PC-9 (cell line): ENCODE measurements at regions of chr4 and their contacts with region 1.

Region 1: DNA sequence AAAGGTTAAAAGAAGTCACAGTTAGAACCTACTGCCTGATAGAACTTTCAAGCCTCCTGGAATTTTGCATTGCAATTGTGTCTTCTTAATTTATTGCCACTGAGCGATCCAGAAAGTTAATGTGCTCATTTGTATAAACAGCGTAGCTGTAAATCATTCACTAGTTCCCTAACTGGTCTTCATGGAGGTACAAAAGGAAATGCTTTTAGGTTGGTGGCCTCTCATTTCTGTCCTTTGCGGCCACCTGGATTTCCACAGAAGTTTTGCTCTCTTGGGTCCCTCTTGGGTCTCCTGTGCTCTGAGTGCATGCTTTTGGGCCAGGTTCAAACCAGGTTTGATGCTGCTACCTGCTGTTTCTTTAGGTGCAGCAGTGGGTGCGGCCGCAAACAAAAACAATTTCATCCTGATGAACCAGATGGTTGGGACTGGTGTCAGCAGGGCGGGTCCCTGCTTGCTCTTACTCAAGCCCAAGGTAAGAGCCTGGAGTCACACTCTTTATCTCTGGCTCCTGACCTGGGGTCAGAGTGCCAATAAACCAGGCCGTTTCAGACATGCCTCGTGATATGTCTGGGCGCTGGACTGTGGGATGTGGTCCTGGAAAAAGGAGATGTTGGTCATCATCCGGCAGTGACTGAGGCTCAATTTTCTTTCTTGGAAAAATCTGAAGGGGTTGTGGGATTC is 270.1 kb downstream of the PTTG2 start:
- DNase-seq: peak; percentile 73 to 95
- H3K4me3 ChIP-seq: peak overlapping the region; percentile 13; the same call in 1 of the 2 replicates
- H3K27ac ChIP-seq: peak overlapping the region; percentile 77
- H3K4me1 ChIP-seq: peaks cover 35% of the 10 kb centered on the region
- H3K27me3 ChIP-seq: no peaks in the 10 kb centered on the region
- CTCF ChIP-seq: no peak

Region 2: DNA sequence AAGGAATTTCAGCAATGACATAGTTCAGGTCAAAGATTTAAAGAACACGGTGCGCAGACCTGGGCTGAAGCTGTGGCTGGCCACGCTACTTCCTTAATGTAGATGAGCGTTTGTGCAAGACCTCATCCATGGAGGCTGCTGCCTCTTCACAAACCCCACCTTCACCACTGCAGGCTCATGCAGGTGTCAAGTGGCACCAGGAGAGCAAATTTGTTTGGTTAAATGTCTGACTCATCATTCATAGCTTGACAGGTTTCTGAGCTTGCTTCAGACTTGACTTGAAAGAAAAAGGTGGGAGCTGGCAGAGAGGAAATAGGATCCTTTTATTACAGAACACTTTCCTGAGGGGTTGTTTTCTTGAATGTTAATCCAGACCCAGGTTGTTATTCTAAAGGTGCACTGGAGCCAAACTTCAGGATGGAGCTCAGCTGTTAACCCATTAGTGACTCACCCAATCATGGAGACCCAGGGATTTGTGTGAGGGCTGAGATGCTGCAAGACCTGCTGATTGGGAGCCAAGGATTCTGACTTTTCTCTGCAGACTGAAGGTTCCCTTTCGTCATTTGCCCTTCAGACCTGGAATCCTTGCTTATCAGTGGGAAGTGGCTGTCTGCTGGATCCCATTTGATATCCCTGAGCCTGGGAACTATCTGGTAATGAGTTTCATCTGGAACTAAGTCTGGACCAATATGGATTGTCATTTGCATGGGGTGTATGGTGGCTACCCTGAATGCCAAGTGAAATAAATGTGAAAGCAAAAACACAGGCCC is 45.3 kb after region 1 on chr4:
- CTCF ChIA-PET with region 1: no interaction called
- POLR2A ChIA-PET with region 1: no interaction called
- intact Hi-C with region 1: loop called (anchors 5 kb)
- DNase-seq: peak; percentile 80 to 99
- H3K4me3 ChIP-seq: no peak overlapping the region
- H3K27ac ChIP-seq: peak overlapping the region; percentile 79
- H3K4me1 ChIP-seq: peaks cover 33% of the 10 kb centered on the region
- H3K27me3 ChIP-seq: no peaks in the 10 kb centered on the region
- CTCF ChIP-seq: no peak